Mammary epithelial cell (primary cell): ENCODE measurements at regions of chr3 and their contacts with region 1.

Region 1: GRCh38 chr3:139329345-139329850 is 14.4 kb upstream of the MRPS22 start:
- DNase-seq: peak; percentile 72
- H3K4me3 ChIP-seq: no peak overlapping the region
- H3K27ac ChIP-seq: no peak overlapping the region
- H3K4me1 ChIP-seq: no peaks in the 10 kb centered on the region
- H3K27me3 ChIP-seq: no peaks in the 10 kb centered on the region
- CTCF ChIP-seq: peak; percentile 96 to 99

Region 2: GRCh38 chr3:138705675-138706074 is 623.7 kb before region 1 on chr3:
- CTCF ChIA-PET with region 1: no interaction called
- dilution Hi-C with region 1: no loop called
- in situ Hi-C with region 1: no loop called
- intact Hi-C with region 1: no loop called
- DNase-seq: no peak
- H3K4me3 ChIP-seq: no peak overlapping the region
- H3K27ac ChIP-seq: no peak overlapping the region
- H3K4me1 ChIP-seq: no peaks in the 10 kb centered on the region
- H3K27me3 ChIP-seq: no peaks in the 10 kb centered on the region
- CTCF ChIP-seq: no peak

Region 3: DNA sequence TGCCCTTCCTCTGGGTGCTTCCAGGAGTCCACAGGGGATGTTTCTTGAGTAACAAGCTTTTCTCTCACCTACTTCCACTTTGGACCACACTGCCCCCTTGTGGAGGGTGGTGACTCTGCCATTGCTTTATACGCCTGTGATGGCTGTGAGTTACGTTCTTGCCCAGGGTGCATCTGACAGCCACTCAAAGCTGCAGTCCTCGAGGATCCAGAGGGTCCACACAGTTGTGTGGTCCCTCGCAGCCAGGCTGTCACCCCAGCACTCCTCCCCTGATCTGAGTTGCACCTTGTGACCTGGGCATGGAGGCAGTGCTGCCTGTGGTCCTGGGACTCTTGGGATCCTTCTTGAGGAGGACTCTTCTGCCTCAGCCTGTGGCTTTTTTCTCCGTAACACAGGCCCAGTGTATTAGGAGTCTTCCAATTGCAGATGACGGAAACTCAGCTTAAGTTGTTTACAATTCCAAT is 405.8 kb before region 1 on chr3:
- CTCF ChIA-PET with region 1: no interaction called
- dilution Hi-C with region 1: no loop called
- in situ Hi-C with region 1: no loop called
- intact Hi-C with region 1: loop called (anchors 5 kb)
- DNase-seq: peak; percentile 78
- H3K4me3 ChIP-seq: no peak overlapping the region
- H3K27ac ChIP-seq: no peak overlapping the region
- H3K4me1 ChIP-seq: peaks cover 16% of the 10 kb centered on the region
- H3K27me3 ChIP-seq: no peaks in the 10 kb centered on the region
- CTCF ChIP-seq: peak; percentile 94 to 98

Region 4: DNA sequence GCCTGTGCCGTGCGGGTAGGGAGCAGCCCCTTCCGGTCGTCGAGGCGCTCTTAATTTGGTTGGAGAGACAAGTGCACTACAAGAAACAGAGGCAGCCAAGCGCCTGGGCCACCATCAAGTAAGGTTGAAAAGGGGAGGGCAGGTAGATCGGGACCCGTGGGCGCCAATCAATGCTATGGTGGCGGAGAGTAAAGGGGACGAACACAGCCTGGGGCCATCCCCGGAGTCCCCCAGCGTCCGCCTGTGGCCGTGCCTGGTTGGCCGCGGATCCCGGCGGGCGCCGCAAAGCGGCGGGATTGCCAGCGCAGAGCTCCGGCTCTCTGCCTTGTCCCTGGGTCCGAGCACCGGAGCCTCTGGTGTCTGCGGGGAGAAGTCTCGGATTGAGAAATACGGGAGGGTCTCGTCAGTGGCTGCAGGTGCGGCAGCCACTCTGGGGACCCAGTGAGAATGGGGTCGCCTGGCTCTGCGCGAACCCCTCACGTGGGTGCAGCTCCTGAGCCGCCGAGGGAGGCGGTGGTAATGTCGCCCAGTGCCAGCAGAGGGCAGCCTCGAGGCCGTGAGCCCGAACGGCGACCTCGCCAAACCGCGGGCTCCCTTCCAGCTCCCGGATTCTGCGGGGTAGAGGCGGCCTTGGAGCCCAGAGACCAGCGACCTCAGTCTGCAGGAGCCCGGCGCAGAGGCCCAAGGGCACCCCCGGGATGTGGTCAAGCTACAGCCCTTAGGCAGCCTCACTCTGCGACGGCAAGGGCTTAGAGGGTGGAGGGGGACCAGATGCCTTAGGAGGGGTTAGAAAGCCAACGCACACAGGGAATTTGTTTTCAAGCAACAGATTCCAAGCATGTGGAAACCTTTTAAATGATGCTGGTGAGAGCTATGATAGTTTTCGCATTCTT is 393.3 kb before region 1 on chr3:
- CTCF ChIA-PET with region 1: interaction called, 8 read pairs
- dilution Hi-C with region 1: no loop called
- in situ Hi-C with region 1: loop called in 1 of 2 experiments (anchors 10 kb)
- intact Hi-C with region 1: loop called (anchors 1 kb)
- DNase-seq: peak; percentile 39
- H3K4me3 ChIP-seq: peak overlapping the region; percentile 15 to 50 (median 44)
- H3K27ac ChIP-seq: no peak overlapping the region
- H3K4me1 ChIP-seq: peaks cover 19% of the 10 kb centered on the region
- H3K27me3 ChIP-seq: peaks cover 36% of the 10 kb centered on the region
- CTCF ChIP-seq: peak; percentile 63 to 87

Region 5: GRCh38 chr3:139127101-139127500 is 202.3 kb before region 1 on chr3:
- CTCF ChIA-PET with region 1: no interaction called
- dilution Hi-C with region 1: no loop called
- in situ Hi-C with region 1: loop called in 1 of 2 experiments (anchors 25 kb)
- intact Hi-C with region 1: loop called (anchors 5 kb)
- DNase-seq: peak; percentile 90
- H3K4me3 ChIP-seq: no peak overlapping the region
- H3K27ac ChIP-seq: no peak overlapping the region
- H3K4me1 ChIP-seq: no peaks in the 10 kb centered on the region
- H3K27me3 ChIP-seq: peaks cover 4% of the 10 kb centered on the region
- CTCF ChIP-seq: no peak

Region 6: DNA sequence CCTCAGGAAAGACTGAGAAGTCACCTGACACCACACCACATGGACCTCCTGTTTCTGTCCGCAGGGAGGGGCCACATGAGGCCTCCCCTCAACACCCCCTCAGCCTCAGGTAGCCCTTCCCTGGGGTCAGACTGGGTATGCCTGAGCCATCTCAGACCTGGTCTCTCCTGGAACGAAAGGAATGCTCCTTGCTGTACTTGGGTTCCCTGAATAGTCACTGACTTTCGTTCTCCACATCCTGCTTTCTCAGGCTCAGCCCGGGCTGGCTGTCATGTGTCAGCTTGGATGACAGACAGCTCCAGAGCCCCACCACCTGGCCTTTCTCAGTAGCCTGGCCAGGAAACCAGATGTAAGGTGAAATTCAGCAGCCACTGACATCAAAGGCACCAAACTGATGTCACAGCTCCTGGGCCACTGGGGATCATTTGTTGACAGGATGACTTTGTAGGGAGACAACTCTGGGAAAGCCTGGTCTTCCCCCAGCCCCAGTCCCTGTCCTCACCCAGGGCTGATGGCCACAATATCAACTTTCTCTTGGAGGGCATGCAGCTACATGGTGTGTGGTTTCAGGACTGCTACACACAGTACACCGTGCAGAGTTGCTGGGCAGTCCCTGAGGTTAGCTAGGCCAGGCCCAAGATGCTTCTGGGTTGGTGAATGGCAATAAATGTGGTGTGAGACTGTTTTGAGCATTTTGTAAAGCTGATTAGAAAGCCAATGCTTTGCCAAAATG is 127.0 kb before region 1 on chr3:
- CTCF ChIA-PET with region 1: no interaction called
- dilution Hi-C with region 1: no loop called
- in situ Hi-C with region 1: no loop called
- intact Hi-C with region 1: loop called (anchors 5 kb)
- DNase-seq: peak; percentile 53
- H3K4me3 ChIP-seq: no peak overlapping the region
- H3K27ac ChIP-seq: no peak overlapping the region
- H3K4me1 ChIP-seq: peaks cover 11% of the 10 kb centered on the region
- H3K27me3 ChIP-seq: no peaks in the 10 kb centered on the region
- CTCF ChIP-seq: peak; percentile 16 to 47

Region 7: DNA sequence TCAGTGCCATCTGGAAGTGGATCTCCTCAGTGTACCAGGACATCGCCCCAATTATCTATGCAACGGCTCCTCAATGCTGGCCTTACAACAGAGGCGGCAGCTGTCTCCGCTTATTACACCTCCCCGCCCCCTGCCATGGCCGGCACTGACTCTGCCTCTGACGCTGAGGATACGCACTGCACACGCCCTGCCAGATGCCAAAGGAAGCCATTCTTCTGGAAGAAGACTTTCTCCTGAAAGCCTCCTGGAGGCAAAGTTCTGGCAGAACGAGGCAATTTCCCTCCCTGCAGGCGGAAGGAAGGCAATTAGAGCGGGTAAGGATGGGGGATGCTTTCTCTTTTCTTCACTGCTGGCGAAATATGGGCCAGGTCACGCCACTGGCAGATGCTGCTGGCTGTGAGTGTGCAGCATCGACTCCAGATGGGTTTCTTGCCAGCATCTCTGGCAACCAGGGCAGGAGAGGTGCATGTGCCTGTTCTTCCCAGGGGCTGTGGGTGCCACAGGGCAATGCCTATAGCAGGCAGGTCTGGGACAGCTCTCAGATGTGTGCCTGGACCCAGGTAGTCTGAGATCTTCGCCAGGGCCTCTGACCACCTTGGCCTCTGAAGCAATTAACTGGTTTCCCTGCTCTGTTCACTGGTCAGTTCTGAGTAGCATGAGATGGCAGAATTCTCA is 47.7 kb before region 1 on chr3:
- CTCF ChIA-PET with region 1: no interaction called
- dilution Hi-C with region 1: no loop called
- in situ Hi-C with region 1: no loop called
- intact Hi-C with region 1: loop called (anchors 5 kb)
- DNase-seq: no peak
- H3K4me3 ChIP-seq: no peak overlapping the region
- H3K27ac ChIP-seq: no peak overlapping the region
- H3K4me1 ChIP-seq: no peaks in the 10 kb centered on the region
- H3K27me3 ChIP-seq: no peaks in the 10 kb centered on the region
- CTCF ChIP-seq: no peak

Region 8: GRCh38 chr3:139353920-139354556 is 24.6 kb after region 1 on chr3:
- CTCF ChIA-PET with region 1: no interaction called
- dilution Hi-C with region 1: no loop called
- in situ Hi-C with region 1: no loop called
- intact Hi-C with region 1: no loop called
- DNase-seq: peak; percentile 54
- H3K4me3 ChIP-seq: no peak overlapping the region
- H3K27ac ChIP-seq: no peak overlapping the region
- H3K4me1 ChIP-seq: no peaks in the 10 kb centered on the region
- H3K27me3 ChIP-seq: no peaks in the 10 kb centered on the region
- CTCF ChIP-seq: peak; percentile 60 to 69